A549 (cell line): ENCODE measurements at regions of chr14 and their contacts with region 1.

Region 1: DNA sequence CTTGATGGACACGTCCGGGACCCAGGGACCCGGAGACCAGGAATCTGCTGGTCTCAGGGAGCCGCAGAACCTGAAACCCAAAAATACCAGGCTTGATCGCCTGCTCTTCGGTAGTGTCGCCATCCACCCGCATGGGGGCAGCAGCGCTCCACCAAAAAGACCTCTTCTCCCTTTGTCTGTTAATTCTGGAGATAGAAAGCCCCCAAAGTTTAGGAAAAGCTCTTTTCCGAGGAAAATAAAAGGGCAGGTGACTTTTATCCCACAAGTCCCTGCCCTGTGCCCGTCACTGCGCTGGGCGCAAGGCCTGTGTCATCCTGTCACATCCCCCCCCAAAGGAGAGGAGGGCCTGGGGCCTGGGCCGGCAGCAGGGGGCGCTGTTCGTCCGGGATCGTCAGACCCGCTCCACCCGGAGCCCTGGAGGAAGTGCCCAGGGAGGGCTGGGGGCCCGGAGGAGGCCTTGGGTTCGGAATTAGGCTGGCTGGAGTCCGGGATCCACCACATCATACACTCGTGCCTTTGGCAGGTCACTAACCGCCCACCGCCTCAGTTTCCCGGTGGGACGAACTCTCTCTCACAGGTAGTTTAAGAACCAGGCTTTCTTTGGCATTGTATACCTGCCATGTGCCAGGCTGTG is 31.9 kb downstream of the DAD1 start:
- DNase-seq: peak; percentile 77 to 80
- ATAC-seq: peak; percentile 86 to 92
- H3K4me3 ChIP-seq: peak overlapping the region; percentile 23; the same call in 1 of the 3 replicates
- H3K27ac ChIP-seq: peak overlapping the region; percentile 81 to 87
- H3K4me1 ChIP-seq: peaks cover 6% of the 10 kb centered on the region; the same call in 1 of the 3 replicates
- CTCF ChIP-seq: peak; percentile 100
- EP300 ChIP-seq: no peak
- POLR2A ChIP-seq: no peak
- RAD21 ChIP-seq: peak; percentile 89 to 100

Region 2: DNA sequence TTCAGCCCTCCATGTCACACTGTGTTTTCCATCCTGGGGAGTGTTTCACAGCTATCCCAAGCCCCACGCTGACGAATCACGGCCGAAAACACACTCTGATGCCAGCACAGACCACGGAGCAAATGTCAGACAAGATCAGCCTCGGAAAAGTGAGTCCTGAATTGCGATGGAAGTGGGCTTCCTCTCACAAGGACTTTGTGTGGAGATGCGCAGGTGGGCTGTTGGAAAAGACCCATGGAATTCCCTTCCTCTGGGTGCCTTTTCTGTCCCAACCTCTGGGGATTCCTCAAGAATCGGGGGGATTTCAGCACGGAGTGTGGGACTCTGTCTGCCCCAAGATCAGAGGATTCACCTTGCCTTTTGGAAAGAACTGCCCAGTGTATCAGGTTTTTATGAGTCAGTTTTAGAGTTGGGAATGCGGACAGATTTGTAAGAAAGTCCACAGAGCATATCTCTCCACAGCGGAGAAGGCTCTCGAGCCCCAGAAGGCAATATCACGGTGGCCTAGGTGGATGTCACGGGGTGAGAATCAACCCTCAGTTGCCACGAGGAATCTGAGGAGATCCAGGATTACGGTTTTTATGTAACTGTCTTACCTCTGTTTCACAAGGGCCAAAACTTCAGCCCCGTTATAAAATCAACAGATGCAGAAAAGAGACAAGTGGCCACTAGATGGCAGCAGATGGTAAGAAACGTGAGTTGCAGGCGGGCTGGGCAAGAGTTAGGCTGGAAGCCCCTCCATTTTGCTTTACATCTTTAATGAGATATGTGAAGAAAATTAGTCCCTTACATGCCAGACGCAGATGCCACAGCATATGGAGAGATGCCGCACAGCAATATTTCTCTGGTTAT is 170.0 kb before region 1 on chr14:
- CTCF ChIA-PET with region 1: interaction called, 24 read pairs
- POLR2A ChIA-PET with region 1: no interaction called
- DNase-seq: peak; percentile 72 to 82
- ATAC-seq: peak; percentile 55 to 78; a peak in 4 of 6 replicates
- H3K4me3 ChIP-seq: no peak overlapping the region
- H3K27ac ChIP-seq: no peak overlapping the region
- H3K4me1 ChIP-seq: peaks cover 32% of the 10 kb centered on the region
- CTCF ChIP-seq: peak; percentile 90
- EP300 ChIP-seq: no peak
- POLR2A ChIP-seq: no peak
- RAD21 ChIP-seq: peak; percentile 92 to 93

Region 3: GRCh38 chr14:22570132-22570949 is 13.2 kb after region 1 on chr14:
- CTCF ChIA-PET with region 1: interaction called, 55 read pairs
- POLR2A ChIA-PET with region 1: no interaction called
- DNase-seq: peak; percentile 78 to 89
- ATAC-seq: peak; percentile 82 to 87
- H3K4me3 ChIP-seq: no peak overlapping the region
- H3K27ac ChIP-seq: peak overlapping the region; percentile 51 to 80; a peak in 5 of 6 replicates
- H3K4me1 ChIP-seq: peaks cover 37% of the 10 kb centered on the region
- CTCF ChIP-seq: peak; percentile 95
- EP300 ChIP-seq: no peak
- POLR2A ChIP-seq: no peak
- RAD21 ChIP-seq: peak; percentile 92 to 95

Region 4: GRCh38 chr14:22773162-22774010 is 216.3 kb after region 1 on chr14:
- CTCF ChIA-PET with region 1: interaction called, 10 read pairs
- POLR2A ChIA-PET with region 1: no interaction called
- DNase-seq: no peak
- ATAC-seq: no peak
- H3K4me3 ChIP-seq: no peak overlapping the region
- H3K27ac ChIP-seq: no peak overlapping the region
- H3K4me1 ChIP-seq: peaks cover 3% of the 10 kb centered on the region
- CTCF ChIP-seq: no peak
- EP300 ChIP-seq: no peak
- POLR2A ChIP-seq: no peak
- RAD21 ChIP-seq: no peak

Region 5: DNA sequence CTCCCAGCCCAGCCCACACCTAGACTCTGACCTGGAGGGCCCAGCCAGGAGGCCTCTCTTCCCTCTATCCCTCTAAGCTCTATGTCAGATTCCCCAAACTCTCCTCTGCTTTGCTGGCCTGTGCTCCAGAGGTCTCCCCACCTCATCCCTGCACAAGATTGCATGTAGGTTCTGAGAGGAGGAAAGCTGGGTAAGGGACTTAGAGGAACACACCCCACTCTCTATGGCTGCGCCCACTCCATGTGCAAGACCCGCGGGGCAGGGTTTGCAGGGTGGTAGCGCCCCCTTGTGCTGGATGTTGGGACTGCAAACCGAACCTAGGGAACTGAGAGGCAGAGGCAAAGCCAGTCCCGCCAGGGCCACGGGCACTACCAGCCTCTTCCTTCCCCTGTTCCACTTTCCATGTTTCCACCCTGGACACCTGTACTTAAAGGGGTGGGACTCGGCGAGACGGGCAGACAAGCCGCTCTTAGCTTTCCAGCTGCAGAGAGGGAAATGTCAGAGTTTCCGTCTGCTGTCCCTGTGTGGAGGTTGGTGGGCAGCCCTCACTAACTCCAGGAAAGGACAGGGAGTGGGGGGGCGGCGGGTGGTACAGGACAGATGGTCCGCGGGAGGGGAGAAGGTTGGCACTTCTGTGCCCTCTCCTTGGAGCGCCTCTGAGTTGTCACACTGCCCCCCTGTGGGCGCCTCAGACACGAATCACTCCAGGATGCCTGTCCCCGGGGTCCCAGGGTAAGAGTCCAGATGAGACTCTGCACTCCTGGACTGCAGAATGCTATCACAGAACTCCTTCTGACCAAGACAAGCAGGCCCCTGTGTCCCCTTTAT is 296.0 kb after region 1 on chr14:
- CTCF ChIA-PET with region 1: interaction called, 117 read pairs
- POLR2A ChIA-PET with region 1: no interaction called
- DNase-seq: peak; percentile 70 to 82
- ATAC-seq: peak; percentile 91 to 96
- H3K4me3 ChIP-seq: peak overlapping the region; percentile 57
- H3K27ac ChIP-seq: peak overlapping the region; percentile 91 to 98
- H3K4me1 ChIP-seq: peaks cover 4% of the 10 kb centered on the region; the same call in 2 of the 3 replicates
- CTCF ChIP-seq: peak; percentile 92
- EP300 ChIP-seq: no peak
- POLR2A ChIP-seq: no peak
- RAD21 ChIP-seq: peak; percentile 91 to 97

Region 6: GRCh38 chr14:22886500-22887259 is 329.6 kb after region 1 on chr14:
- CTCF ChIA-PET with region 1: interaction called, 15 read pairs
- POLR2A ChIA-PET with region 1: no interaction called
- DNase-seq: peak; percentile 66 to 73
- ATAC-seq: peak; percentile 78 to 80
- H3K4me3 ChIP-seq: peak overlapping the region; percentile 61
- H3K27ac ChIP-seq: peak overlapping the region; percentile 87 to 93
- H3K4me1 ChIP-seq: peaks cover 18% of the 10 kb centered on the region
- CTCF ChIP-seq: no peak
- EP300 ChIP-seq: no peak
- POLR2A ChIP-seq: peak; percentile 65
- RAD21 ChIP-seq: no peak

Region 7: GRCh38 chr14:23057757-23058653 is 500.9 kb after region 1 on chr14:
- CTCF ChIA-PET with region 1: interaction called, 11 read pairs
- POLR2A ChIA-PET with region 1: no interaction called
- DNase-seq: peak; percentile 87 to 89
- ATAC-seq: peak; percentile 67 to 79
- H3K4me3 ChIP-seq: peak overlapping the region; percentile 71
- H3K27ac ChIP-seq: peak overlapping the region; percentile 76 to 89
- H3K4me1 ChIP-seq: peaks cover 41% of the 10 kb centered on the region
- CTCF ChIP-seq: peak; percentile 82
- EP300 ChIP-seq: no peak
- POLR2A ChIP-seq: no peak
- RAD21 ChIP-seq: peak; percentile 79 to 81